Prostate gland (tissue), 2 donors: ENCODE measurements at regions of chr14 and their contacts with region 1.

Region 1: GRCh38 chr14:78566026-78566858 is 396.1 kb downstream of the NRXN3 start:
- DNase-seq: peak; percentile 73
- H3K4me3 ChIP-seq: no peak overlapping the region
- H3K27ac ChIP-seq: no peak overlapping the region
- H3K4me1 ChIP-seq: no peaks in the 10 kb centered on the region
- H3K27me3 ChIP-seq: no peaks in the 10 kb centered on the region
- CTCF ChIP-seq: peak in 3 of 4 experiments; percentile 68 to 81 (median 71)
- POLR2A ChIP-seq: no peak

Region 2: GRCh38 chr14:77659831-77660230 is 906.4 kb before region 1 on chr14:
- intact Hi-C with region 1: loop called (anchors 5 kb)
- DNase-seq: no peak
- H3K4me3 ChIP-seq: no peak overlapping the region
- H3K27ac ChIP-seq: no peak overlapping the region
- H3K4me1 ChIP-seq: no peaks in the 10 kb centered on the region
- H3K27me3 ChIP-seq: no peaks in the 10 kb centered on the region
- CTCF ChIP-seq: no peak
- POLR2A ChIP-seq: no peak

Region 3: GRCh38 chr14:77862154-77862786 is 704.0 kb before region 1 on chr14:
- intact Hi-C with region 1: loop called (anchors 5 kb)
- DNase-seq: peak; percentile 43
- H3K4me3 ChIP-seq: no peak overlapping the region
- H3K27ac ChIP-seq: no peak overlapping the region
- H3K4me1 ChIP-seq: no peaks in the 10 kb centered on the region
- H3K27me3 ChIP-seq: no peaks in the 10 kb centered on the region
- CTCF ChIP-seq: peak; percentile 75 to 87 (median 86)
- POLR2A ChIP-seq: no peak